ENCODE measurements at regions of chr7 and their contacts with region 1.

Region 1: GRCh38 chr7:30348083-30348560 is 63.7 kb downstream of the ZNRF2 start:
- DNase-seq: peak; percentile 44
- H3K4me3 Mint-ChIP-seq: peak overlapping the region; percentile 53
- H3K27ac Mint-ChIP-seq: peak overlapping the region; percentile 85
- H3K4me1 Mint-ChIP-seq: peaks cover 59% of the 10 kb centered on the region
- H3K27me3 Mint-ChIP-seq: no peaks in the 10 kb centered on the region

Region 2: DNA sequence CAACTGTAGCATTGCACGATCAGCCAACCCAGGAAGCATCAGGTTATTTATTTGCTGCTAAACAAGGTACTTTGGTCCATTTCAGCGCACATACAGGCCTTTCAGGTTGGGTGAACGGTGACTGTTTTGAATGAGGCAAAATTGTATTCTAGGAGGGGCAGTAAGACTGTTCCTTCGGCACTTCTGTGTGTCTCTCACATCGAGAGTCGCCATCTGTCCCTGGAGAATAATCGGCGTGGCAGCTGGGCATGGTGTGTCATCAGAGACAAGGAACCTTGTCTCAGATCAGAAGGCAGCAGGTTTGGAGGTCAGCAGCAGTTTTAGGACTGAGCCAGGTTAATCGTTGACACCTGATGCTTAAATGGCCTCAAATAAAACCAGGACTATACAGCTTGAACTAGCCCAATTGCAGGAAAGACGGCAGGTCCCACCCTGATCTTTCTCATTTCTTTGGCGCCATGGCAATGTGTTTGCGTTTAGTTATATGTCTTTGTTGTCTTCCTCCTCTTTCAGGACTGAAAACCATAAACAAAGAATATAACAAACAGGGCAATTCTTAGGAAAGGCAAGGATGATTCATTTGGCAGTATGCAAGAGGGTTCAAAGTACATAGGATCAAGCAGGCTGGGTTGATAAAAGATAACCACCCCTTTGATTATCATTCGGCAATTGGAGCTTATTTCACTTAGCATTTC is 876.5 kb before region 1 on chr7:
- intact Hi-C with region 1: no loop called
- DNase-seq: no peak
- H3K4me3 Mint-ChIP-seq: no peak overlapping the region
- H3K27ac Mint-ChIP-seq: no peak overlapping the region
- H3K4me1 Mint-ChIP-seq: no peaks in the 10 kb centered on the region
- H3K27me3 Mint-ChIP-seq: no peaks in the 10 kb centered on the region

Region 3: GRCh38 chr7:30164567-30164966 is 183.6 kb before region 1 on chr7:
- intact Hi-C with region 1: loop called (anchors 5 kb)
- DNase-seq: no peak
- H3K4me3 Mint-ChIP-seq: no peak overlapping the region
- H3K27ac Mint-ChIP-seq: peak overlapping the region; percentile 48
- H3K4me1 Mint-ChIP-seq: peaks cover 40% of the 10 kb centered on the region
- H3K27me3 Mint-ChIP-seq: peaks cover 2% of the 10 kb centered on the region

Region 4: DNA sequence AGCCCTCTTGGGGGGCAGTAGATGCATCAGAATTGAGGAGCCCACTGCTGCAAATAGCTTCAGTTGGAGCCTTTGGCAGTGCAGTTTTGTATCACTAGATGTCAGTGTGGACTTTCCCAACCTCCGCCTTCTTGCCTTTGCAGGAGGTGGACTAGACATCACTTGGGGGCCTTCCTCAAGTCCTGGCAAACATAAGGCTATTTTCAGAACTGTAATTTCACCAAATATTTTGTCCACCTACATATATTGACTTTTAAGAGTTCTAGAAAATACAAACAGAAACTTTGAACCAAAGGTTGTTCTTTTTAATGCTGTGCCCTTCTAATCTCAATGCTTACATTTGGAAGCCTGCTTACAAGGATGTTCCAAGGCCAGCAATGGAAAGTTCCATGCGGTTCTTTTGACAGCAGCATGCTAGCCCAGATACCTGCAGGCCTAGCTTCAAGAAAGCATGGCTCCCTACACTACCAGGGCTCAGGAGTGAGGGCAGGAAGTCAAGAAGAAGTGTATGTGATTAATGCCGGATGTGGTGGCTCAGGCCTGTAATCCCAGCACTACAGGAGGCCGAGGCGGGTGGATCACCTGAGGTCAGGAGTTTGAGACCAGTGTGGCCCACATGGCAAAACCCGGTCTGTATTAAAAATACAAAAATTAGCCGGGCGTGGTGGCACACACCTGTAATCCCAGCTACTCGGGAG is 71.8 kb before region 1 on chr7:
- intact Hi-C with region 1: loop called (anchors 2 kb)
- DNase-seq: peak; percentile 32
- H3K4me3 Mint-ChIP-seq: no peak overlapping the region
- H3K27ac Mint-ChIP-seq: no peak overlapping the region
- H3K4me1 Mint-ChIP-seq: peaks cover 6% of the 10 kb centered on the region
- H3K27me3 Mint-ChIP-seq: no peaks in the 10 kb centered on the region

Region 5: GRCh38 chr7:30322271-30323005 is 25.7 kb before region 1 on chr7:
- intact Hi-C with region 1: loop called (anchors 1 kb)
- DNase-seq: peak; percentile 16
- H3K4me3 Mint-ChIP-seq: peak overlapping the region; percentile 70
- H3K27ac Mint-ChIP-seq: peak overlapping the region; percentile 92
- H3K4me1 Mint-ChIP-seq: peaks cover 54% of the 10 kb centered on the region
- H3K27me3 Mint-ChIP-seq: no peaks in the 10 kb centered on the region

Region 6: GRCh38 chr7:30330134-30331111 is 17.7 kb before region 1 on chr7:
- intact Hi-C with region 1: loop called (anchors 1 kb)
- DNase-seq: no peak
- H3K4me3 Mint-ChIP-seq: peak overlapping the region; percentile 60
- H3K27ac Mint-ChIP-seq: peak overlapping the region; percentile 69
- H3K4me1 Mint-ChIP-seq: peaks cover 44% of the 10 kb centered on the region
- H3K27me3 Mint-ChIP-seq: no peaks in the 10 kb centered on the region

Region 7: DNA sequence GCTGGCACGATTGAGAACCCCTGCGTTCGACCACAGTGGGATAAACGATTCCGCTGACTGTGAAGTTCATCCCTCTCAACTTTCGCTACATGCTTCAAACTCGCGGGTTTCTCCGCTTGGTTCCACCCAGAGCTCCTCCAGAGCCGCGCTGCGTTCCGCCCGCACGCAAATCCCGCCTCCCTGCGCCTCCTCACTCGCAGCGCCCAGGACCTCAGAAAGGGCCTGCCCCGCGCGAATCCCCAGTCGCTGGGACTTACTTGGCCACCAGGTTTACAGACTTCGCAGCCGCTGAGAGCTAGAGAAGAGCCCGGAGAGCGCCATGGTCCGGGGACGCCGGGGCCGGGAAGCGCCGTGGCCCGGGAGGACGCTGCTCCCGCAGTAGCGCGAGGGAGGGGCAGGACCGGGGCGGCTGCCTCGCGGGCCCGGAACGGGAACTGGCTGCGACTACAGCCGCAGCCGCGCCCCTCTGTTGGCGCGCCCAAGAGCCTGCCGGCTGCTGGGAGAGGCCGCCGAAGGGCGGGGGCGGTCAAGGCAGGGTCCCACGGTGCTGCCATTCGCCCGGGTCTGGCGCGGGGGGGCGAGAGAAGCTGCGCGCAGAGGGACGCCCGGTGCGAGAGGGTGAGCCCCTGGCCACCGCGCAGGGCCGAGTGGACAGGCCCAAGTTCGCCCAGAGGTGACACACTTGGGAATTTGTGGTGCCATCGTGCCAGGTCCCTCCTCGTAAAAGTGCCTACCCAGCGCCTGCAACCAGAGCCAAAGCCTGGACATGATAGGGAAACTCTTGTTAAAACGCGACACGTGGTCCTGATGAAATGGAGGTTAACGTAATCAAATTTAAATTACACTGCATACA is 130.5 kb after region 1 on chr7 and contains the start of gene NOD1:
- intact Hi-C with region 1: loop called (anchors 5 kb)
- DNase-seq: peak; percentile 70
- H3K4me3 Mint-ChIP-seq: peak within 1 kb of the TSS; percentile 91
- H3K27ac Mint-ChIP-seq: peak within 1 kb of the TSS; percentile 89
- H3K4me1 Mint-ChIP-seq: peaks cover 51% of the 10 kb centered on the region
- H3K27me3 Mint-ChIP-seq: no peaks in the 10 kb centered on the region
- total RNA-seq, gene NOD1: 14.8 and 15.8 TPM in 2 replicates

Region 8: GRCh38 chr7:30504347-30505173 is 156.4 kb after region 1 on chr7 and contains the start of gene GGCT:
- intact Hi-C with region 1: loop called (anchors 5 kb)
- DNase-seq: peak; percentile 97
- H3K4me3 Mint-ChIP-seq: peak within 1 kb of the TSS; percentile 85
- H3K27ac Mint-ChIP-seq: peak within 1 kb of the TSS; percentile 88
- H3K4me1 Mint-ChIP-seq: peaks cover 50% of the 10 kb centered on the region
- H3K27me3 Mint-ChIP-seq: no peaks in the 10 kb centered on the region
- total RNA-seq, gene GGCT: 71.6 and 72.7 TPM in 2 replicates

Measured in activated T-helper 2 cell treated with anti-CD3 and anti-CD28 coated beads, Interferon-gamma antibody, Interleukin-2, Interleukin-4, amounts not matched to agents 10 μg/mL and 5 μg/mL and 100 μg/mL, durations not matched to agents 14 hours and 24 hours and 36 hours (primary cell).